Calu3 (cell line): ENCODE measurements at regions of chr18 and their contacts with region 1.

Region 1: GRCh38 chr18:58013241-58014211 is 30.5 kb upstream of the NEDD4L start:
- DNase-seq: peak; percentile 49
- H3K4me3 Mint-ChIP-seq: no peak overlapping the region
- H3K27ac Mint-ChIP-seq: peak overlapping the region; percentile 92
- H3K4me1 Mint-ChIP-seq: peaks cover 64% of the 10 kb centered on the region
- H3K27me3 Mint-ChIP-seq: no peaks in the 10 kb centered on the region
- CTCF ChIP-seq: no peak

Region 2: DNA sequence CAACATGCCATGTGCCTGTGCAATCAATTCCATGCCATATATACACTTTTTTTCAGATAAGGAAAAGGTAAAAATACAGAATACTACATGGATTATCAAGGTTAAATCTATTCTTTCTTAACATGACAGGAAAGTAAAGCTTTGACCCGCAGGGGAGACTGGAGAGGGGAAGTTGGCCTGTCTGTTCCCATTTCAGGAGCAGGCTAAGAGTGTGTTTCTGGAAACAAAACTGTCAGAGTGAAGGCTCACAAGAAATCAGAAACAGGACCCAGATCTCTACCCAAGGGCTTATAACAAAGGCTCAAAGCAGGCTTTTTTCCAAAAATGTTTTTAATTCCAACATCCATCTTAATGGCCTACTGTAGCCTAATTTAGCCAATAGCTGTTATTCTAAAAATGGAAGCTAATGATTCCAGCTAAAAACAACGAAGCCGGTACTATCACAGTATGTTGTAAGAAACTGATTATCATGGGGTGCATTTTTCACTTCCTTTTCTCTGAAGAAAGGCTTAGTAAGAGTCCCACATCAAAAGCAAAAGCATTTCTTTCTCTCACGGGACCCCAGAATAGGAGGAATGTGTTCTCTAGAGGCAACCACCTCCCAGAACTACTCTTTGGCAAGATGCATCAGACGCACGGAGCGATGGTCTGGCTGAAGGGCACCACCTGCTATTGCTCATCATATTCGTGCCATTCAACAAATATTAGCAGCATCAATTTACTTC is 468.4 kb before region 1 on chr18:
- CTCF ChIA-PET with region 1: no interaction called
- intact Hi-C with region 1: no loop called
- DNase-seq: no peak
- H3K4me3 Mint-ChIP-seq: no peak overlapping the region
- H3K27ac Mint-ChIP-seq: no peak overlapping the region
- H3K4me1 Mint-ChIP-seq: no peaks in the 10 kb centered on the region
- H3K27me3 Mint-ChIP-seq: no peaks in the 10 kb centered on the region
- CTCF ChIP-seq: no peak

Region 3: GRCh38 chr18:57906852-57907251 is 106.7 kb before region 1 on chr18:
- CTCF ChIA-PET with region 1: interaction called, 3 read pairs
- intact Hi-C with region 1: loop called (anchors 5 kb)
- DNase-seq: peak; percentile 58
- H3K4me3 Mint-ChIP-seq: no peak overlapping the region
- H3K27ac Mint-ChIP-seq: peak overlapping the region; percentile 7
- H3K4me1 Mint-ChIP-seq: peaks cover 68% of the 10 kb centered on the region
- H3K27me3 Mint-ChIP-seq: no peaks in the 10 kb centered on the region
- CTCF ChIP-seq: peak; percentile 48